ENCODE measurements at regions of chr7 and their contacts with region 1.

Region 1: GRCh38 chr7:11212080-11212711 is 238.5 kb downstream of the PHF14 start:
- DNase-seq: no peak
- H3K4me3 ChIP-seq: no peak overlapping the region
- H3K27ac ChIP-seq: no peak overlapping the region
- H3K4me1 ChIP-seq: peaks cover 0 to 3% (median 0%) of the 10 kb centered on the region in 4 experiments; a peak in 1 of 7 replicates
- H3K27me3 ChIP-seq: peaks cover 0 to 1% (median 0%) of the 10 kb centered on the region in 4 experiments; a peak in 1 of 7 replicates
- CTCF ChIP-seq: peak in 2 of 3 experiments; percentile 62 to 83; a peak in 3 of 4 replicates
- EP300 ChIP-seq: no peak
- POLR2A ChIP-seq: no peak
- RAD21 ChIP-seq: peak; percentile 87 to 88

Region 2: GRCh38 chr7:11182736-11183135 is 29.5 kb before region 1 on chr7:
- CTCF ChIA-PET with region 1: interaction called, 15 read pairs
- POLR2A ChIA-PET with region 1: no interaction called
- DNase-seq: no peak
- H3K4me3 ChIP-seq: no peak overlapping the region
- H3K27ac ChIP-seq: no peak overlapping the region
- H3K4me1 ChIP-seq: peaks cover 0 to 2% (median 0%) of the 10 kb centered on the region in 4 experiments; a peak in 3 of 7 replicates
- H3K27me3 ChIP-seq: peaks cover 24 to 55% (median 44%) of the 10 kb centered on the region in 4 experiments
- CTCF ChIP-seq: no peak
- EP300 ChIP-seq: no peak
- POLR2A ChIP-seq: no peak
- RAD21 ChIP-seq: no peak

Region 3: GRCh38 chr7:11193131-11193811 is 18.9 kb before region 1 on chr7:
- CTCF ChIA-PET with region 1: interaction called, 17 read pairs
- POLR2A ChIA-PET with region 1: interaction called, 5 read pairs
- DNase-seq: peak; percentile 31 to 58
- H3K4me3 ChIP-seq: peak overlapping the region; percentile 34 to 61 (median 51)
- H3K27ac ChIP-seq: peak overlapping the region; percentile 27
- H3K4me1 ChIP-seq: peaks cover 6 to 17% (median 15%) of the 10 kb centered on the region in 4 experiments
- H3K27me3 ChIP-seq: peaks cover 0 to 7% (median 4%) of the 10 kb centered on the region in 4 experiments; a peak in 4 of 7 replicates
- CTCF ChIP-seq: no peak
- EP300 ChIP-seq: no peak
- POLR2A ChIP-seq: peak in 1 of 2 experiments; percentile 60; a peak in 1 of 3 replicates
- RAD21 ChIP-seq: no peak

Region 4: GRCh38 chr7:11228515-11228914 is 16.3 kb after region 1 on chr7:
- CTCF ChIA-PET with region 1: interaction called, 37 read pairs
- POLR2A ChIA-PET with region 1: no interaction called
- DNase-seq: no peak
- H3K4me3 ChIP-seq: no peak overlapping the region
- H3K27ac ChIP-seq: no peak overlapping the region
- H3K4me1 ChIP-seq: peaks cover 0 to 2% (median 0%) of the 10 kb centered on the region in 4 experiments; a peak in 1 of 7 replicates
- H3K27me3 ChIP-seq: no peaks in the 10 kb centered on the region
- CTCF ChIP-seq: no peak
- EP300 ChIP-seq: no peak
- POLR2A ChIP-seq: no peak
- RAD21 ChIP-seq: no peak

Region 5: DNA sequence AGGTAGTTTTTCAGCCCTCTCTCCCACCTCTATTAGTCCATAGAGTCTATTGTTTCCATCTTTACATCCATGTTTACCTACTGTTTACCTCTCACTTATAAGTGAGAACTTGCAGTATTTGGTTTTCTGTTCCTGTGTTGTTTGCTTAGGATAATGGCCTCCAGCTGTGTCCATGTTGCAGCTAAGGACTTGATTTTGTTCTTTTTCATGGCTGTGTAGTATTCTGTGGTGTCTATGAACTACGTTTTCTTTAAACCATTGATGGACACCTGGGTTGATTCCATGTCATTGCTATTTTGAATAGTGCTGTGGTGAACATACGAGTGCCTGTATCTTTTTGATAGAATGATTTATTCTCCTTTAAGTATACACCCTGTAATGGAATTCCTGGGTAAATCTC is 53.9 kb after region 1 on chr7:
- CTCF ChIA-PET with region 1: no interaction called
- POLR2A ChIA-PET with region 1: no interaction called
- DNase-seq: no peak
- H3K4me3 ChIP-seq: no peak overlapping the region
- H3K27ac ChIP-seq: no peak overlapping the region; the same call in 1 of the 2 replicates
- H3K4me1 ChIP-seq: no peaks in the 10 kb centered on the region
- H3K27me3 ChIP-seq: no peaks in the 10 kb centered on the region
- CTCF ChIP-seq: no peak
- EP300 ChIP-seq: no peak
- POLR2A ChIP-seq: no peak
- RAD21 ChIP-seq: no peak

Region 6: DNA sequence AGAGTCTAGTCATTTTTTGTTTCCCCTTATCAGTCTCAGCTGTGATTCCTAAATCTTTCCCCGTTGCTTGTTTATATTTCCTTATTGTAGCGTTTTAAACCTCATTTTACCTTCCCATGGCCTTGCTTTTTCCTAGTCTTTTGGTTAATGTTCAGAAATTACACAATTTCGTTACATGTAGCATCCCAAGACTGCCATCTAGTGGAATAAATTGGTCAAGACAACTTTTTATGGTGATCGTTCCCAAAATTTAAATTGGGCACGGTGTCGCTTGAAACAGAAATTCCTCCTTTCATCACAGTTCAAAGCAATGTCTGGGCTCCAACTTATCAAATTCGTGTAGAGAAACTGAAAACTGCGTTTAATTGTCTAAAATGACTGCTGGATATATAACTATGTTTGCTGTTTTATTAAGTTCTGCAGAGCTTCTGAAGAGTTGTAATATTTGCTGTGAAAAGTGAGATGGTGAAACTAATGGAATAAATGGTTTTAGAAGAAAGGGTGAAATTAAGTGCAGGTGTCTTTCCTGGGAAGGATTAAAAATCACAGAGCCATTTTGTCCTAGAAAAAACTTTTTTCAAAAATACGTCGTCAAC is 131.7 kb after region 1 on chr7:
- CTCF ChIA-PET with region 1: interaction called, 10 read pairs
- POLR2A ChIA-PET with region 1: no interaction called
- DNase-seq: no peak
- H3K4me3 ChIP-seq: no peak overlapping the region
- H3K27ac ChIP-seq: no peak overlapping the region
- H3K4me1 ChIP-seq: peaks cover 0 to 5% (median 2%) of the 10 kb centered on the region in 4 experiments; a peak in 2 of 7 replicates
- H3K27me3 ChIP-seq: peaks cover 0 to 2% (median 0%) of the 10 kb centered on the region in 4 experiments; a peak in 1 of 7 replicates
- CTCF ChIP-seq: peak in 2 of 3 experiments; percentile 38 to 68; a peak in 2 of 4 replicates
- EP300 ChIP-seq: no peak
- POLR2A ChIP-seq: no peak
- RAD21 ChIP-seq: peak; percentile 84 to 89

Region 7: DNA sequence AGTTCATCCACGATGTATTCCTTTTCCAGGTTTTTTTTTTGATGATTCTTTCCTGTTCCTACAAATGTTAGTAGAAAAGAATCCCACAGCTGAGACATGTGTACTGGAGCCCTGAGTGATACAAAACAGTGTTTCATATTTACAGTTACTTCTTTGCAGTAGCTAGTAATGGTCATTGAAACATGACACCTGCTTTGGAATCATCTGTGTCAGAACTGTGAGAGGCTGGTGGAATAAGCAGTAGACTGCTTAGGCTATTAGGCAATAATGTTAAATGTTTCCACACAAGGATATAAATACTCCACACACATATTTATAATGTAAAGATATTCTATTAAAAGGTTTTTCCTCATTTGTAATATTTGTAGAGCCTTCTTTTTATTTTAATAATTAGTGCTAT is 225.8 kb after region 1 on chr7:
- CTCF ChIA-PET with region 1: no interaction called
- POLR2A ChIA-PET with region 1: no interaction called
- DNase-seq: no peak
- H3K4me3 ChIP-seq: no peak overlapping the region
- H3K27ac ChIP-seq: no peak overlapping the region
- H3K4me1 ChIP-seq: peaks cover 0 to 3% (median 0%) of the 10 kb centered on the region in 4 experiments; a peak in 1 of 7 replicates
- H3K27me3 ChIP-seq: no peaks in the 10 kb centered on the region
- CTCF ChIP-seq: no peak
- EP300 ChIP-seq: no peak
- POLR2A ChIP-seq: no peak
- RAD21 ChIP-seq: no peak

Measured in H1 (cell line).